Sigmoid colon (tissue), 7 donors: ENCODE measurements at regions of chrX and their contacts with region 1.

Region 1: GRCh38 chrX:152941328-152942106 is 43.6 kb downstream of the ZNF185 start:
- DNase-seq: peak; percentile 95
- H3K4me3 ChIP-seq: peak overlapping the region; percentile 34 to 61 (median 53)
- H3K27ac ChIP-seq: peak overlapping the region; percentile 82 to 86 (median 84)
- H3K4me1 ChIP-seq: peaks cover 0 to 8% (median 6%) of the 10 kb centered on the region in 4 donors
- H3K27me3 ChIP-seq: no peaks in the 10 kb centered on the region
- CTCF ChIP-seq: peak; percentile 65 to 70 (median 66)
- EP300 ChIP-seq: no peak
- POLR2A ChIP-seq: no peak

Region 2: GRCh38 chrX:153032397-153033118 is 91.0 kb after region 1 on chrX:
- intact Hi-C with region 1: loop called (anchors 2 kb)
- DNase-seq: peak; percentile 84
- H3K4me3 ChIP-seq: peak overlapping the region in 3 of 4 donors; percentile 30 to 40 (median 38)
- H3K27ac ChIP-seq: no peak overlapping the region
- H3K4me1 ChIP-seq: peaks cover 0 to 4% (median 0%) of the 10 kb centered on the region in 4 donors
- H3K27me3 ChIP-seq: peaks cover 0 to 2% (median 0%) of the 10 kb centered on the region in 3 donors
- CTCF ChIP-seq: peak; percentile 77 to 83 (median 81)
- EP300 ChIP-seq: no peak
- POLR2A ChIP-seq: no peak

Region 3: DNA sequence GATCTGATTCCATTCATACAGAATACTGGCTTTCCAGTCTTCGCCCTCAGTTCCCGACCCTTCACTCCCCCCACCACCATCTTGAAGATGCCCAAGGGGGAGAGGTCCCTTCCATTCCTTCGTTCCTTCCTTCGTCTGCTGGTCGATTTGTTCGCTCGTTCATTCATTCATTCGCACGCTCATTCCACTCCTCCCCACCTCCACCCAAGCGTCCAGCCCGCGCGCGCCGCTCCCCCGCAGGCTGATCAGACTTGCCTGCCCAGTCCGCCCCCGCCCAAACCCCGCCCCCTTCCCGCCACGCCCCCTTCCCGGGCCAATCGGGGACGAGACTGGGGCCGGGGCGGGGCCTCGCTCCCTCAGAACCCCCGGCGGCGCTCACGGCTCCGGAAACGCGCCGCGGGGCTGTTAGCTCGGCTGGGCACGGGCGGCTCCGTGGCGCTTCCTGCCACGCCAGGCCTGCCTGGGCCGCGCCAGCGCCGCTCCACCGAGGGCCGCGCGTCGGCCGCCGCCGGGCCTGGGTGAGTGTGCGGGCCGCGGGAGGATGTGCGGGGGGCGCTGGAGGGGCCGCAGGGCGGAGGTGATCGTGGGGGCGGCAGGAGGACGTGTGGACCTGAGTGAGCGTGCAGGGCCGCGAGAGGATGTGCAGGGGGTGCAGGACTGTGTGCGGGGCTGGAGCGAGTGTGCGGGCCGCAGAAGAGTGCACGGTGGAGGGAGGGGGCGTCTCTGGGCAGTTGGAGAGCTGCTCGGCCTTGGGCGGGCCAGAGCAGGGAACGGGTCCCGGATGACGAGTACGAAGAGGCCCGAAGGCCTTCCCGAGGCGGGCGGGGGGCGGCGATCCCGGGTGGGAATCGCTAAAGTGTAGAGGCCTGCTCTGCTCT is 392.5 kb after region 1 on chrX and contains the start of gene ZNF275:
- intact Hi-C with region 1: loop called (anchors 10 kb)
- DNase-seq: peak; percentile 88
- H3K4me3 ChIP-seq: peak within 1 kb of the TSS; percentile 55 to 71 (median 66)
- H3K27ac ChIP-seq: peak within 1 kb of the TSS; percentile 59 to 80 (median 71)
- H3K4me1 ChIP-seq: peaks cover 0 to 9% (median 9%) of the 10 kb centered on the region in 4 donors
- H3K27me3 ChIP-seq: no peaks in the 10 kb centered on the region
- CTCF ChIP-seq: no peak
- EP300 ChIP-seq: no peak
- POLR2A ChIP-seq: no peak
- total RNA-seq, gene ZNF275: 8.6 to 13.3 (median 9.9) TPM

Region 4: DNA sequence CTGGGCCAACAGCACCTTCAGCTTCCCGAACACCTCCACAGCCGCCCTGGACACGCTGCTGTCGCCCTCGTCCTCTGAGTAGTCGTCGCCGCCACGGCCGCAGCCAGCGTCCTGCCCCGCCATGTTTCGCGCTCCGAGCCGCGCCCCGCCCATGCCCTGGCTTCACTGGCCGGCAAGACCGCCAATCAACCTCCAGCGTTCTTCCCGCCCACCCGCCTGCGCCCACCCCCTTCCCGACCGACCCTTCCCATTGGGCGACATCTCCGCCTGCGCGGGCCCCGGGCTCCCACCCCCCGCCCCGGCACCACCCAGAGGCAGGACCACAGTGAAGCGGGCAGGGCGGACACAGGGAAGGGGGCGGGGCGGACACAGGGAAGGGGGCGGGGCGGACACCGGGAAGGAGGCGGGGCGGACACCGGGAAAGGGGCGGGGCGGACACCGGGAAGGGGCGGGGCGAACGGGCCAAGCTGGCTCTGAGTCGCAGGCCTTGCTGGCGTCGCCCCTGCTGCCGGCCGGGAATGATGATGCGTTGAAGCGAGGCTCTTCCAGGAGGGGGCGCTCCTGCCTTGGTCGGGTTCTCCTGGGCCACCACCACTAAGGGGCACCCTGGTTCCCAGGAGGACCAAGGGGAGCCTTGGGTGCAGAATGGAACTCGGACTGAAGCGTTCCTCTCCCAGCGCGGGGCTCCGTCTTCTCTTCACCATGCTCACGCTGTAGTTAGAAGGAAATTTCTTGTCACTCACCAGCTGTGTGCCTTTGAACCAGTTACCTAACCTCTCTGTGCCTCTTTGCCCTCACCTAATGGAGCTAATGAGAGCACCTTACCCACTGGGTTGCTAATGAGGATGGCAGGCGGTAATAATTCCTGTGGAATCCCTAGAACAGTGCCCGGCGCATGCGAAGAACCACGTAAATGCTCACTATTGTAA is 529.2 kb after region 1 on chrX and contains the start of gene HAUS7:
- intact Hi-C with region 1: loop called (anchors 5 kb)
- DNase-seq: peak; percentile 94
- H3K4me3 ChIP-seq: peak within 1 kb of the TSS; percentile 41 to 70 (median 62)
- H3K27ac ChIP-seq: peak within 1 kb of the TSS; percentile 70 to 86 (median 72)
- H3K4me1 ChIP-seq: peaks cover 0 to 19% (median 11%) of the 10 kb centered on the region in 4 donors
- H3K27me3 ChIP-seq: peaks cover 0 to 2% (median 0%) of the 10 kb centered on the region in 3 donors
- CTCF ChIP-seq: peak; percentile 29 to 52 (median 44)
- EP300 ChIP-seq: no peak
- POLR2A ChIP-seq: no peak
- total RNA-seq, gene HAUS7: 16.8 to 28.2 (median 25.4) TPM

Region 5: DNA sequence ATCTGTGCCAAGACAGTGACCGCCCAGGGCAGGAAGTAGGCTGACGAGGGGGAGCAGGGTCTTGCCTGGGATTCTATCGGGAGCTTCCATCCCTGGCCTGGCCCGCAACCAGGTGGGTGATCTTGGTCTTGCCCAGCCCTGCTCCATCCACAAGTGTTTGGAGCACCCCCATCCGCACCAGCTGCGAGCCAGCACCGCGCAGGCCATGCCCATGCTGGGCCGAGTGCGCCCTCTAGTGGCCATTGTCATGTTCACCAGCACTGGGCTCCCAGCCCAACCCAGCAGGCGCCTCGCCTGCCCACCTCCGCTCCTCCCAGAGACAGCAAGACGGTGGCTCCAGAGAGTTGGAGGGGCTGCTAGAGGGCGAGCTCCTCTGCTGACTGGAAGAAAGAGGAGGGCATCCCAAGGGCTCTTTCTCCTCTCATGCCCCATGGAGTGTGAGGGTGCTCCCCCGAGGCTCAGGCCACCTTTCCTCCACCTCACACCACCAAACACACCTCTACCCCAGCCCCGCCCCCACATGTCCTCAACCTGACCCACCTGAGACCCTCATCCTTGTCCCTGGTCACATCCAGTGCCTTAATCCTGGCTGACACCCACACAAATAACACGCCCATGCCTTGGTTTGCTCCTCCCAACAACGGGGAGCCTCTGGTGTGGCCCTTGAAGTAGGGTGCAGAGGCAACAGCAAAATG is 566.1 kb after region 1 on chrX:
- intact Hi-C with region 1: loop called (anchors 5 kb)
- DNase-seq: peak; percentile 90
- H3K4me3 ChIP-seq: no peak overlapping the region
- H3K27ac ChIP-seq: no peak overlapping the region
- H3K4me1 ChIP-seq: no peaks in the 10 kb centered on the region
- H3K27me3 ChIP-seq: no peaks in the 10 kb centered on the region
- CTCF ChIP-seq: peak; percentile 50 to 71 (median 62)
- EP300 ChIP-seq: no peak
- POLR2A ChIP-seq: no peak